Caco-2 (cell line): ENCODE measurements at regions of chr3 and their contacts with region 1.

Region 1: GRCh38 chr3:49839193-49839809 is 17.1 kb downstream of the TRAIP start:
- DNase-seq: peak; percentile 66 to 76
- H3K4me3 ChIP-seq: no peak overlapping the region
- H3K4me3 Mint-ChIP-seq: no peak overlapping the region
- H3K27ac Mint-ChIP-seq: no peak overlapping the region
- H3K4me1 ChIP-seq: no peaks in the 10 kb centered on the region
- H3K4me1 Mint-ChIP-seq: no peaks in the 10 kb centered on the region
- H3K27me3 ChIP-seq: no peaks in the 10 kb centered on the region
- H3K27me3 Mint-ChIP-seq: no peaks in the 10 kb centered on the region
- CTCF ChIP-seq: peak; percentile 78 to 86

Region 2: DNA sequence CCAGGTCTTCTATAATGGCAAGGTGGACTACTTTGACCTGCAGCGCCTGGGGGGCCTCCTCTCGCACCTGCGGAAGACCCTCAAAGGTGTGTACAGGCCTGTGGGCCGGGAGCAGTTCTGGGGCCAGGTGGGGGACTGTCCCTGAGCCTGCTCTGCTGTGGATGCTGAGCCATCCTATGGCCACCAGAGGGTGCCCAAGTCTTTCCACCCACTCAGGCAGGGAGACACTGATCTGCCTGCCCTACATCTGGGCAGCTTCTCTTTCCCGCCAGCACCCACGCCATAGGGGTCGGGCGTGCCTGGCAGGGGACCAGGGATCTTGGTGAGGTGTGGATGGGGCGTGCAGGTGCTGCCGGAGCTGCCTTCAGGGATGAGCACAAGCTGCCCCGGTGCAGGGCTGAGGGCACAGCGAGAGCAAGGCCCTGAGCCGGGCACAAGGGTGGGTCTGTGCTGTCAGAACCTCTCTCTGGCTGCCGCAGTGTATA is 135.8 kb before region 1 on chr3:
- CTCF ChIA-PET with region 1: interaction called, 5 read pairs
- POLR2A ChIA-PET with region 1: no interaction called
- intact Hi-C with region 1: loop called (anchors 1 kb)
- DNase-seq: peak; percentile 67 to 72
- H3K4me3 ChIP-seq: no peak overlapping the region
- H3K4me3 Mint-ChIP-seq: no peak overlapping the region
- H3K27ac Mint-ChIP-seq: no peak overlapping the region
- H3K4me1 ChIP-seq: no peaks in the 10 kb centered on the region
- H3K4me1 Mint-ChIP-seq: no peaks in the 10 kb centered on the region
- H3K27me3 ChIP-seq: no peaks in the 10 kb centered on the region
- H3K27me3 Mint-ChIP-seq: no peaks in the 10 kb centered on the region
- CTCF ChIP-seq: peak; percentile 71 to 87

Region 3: GRCh38 chr3:49723628-49724551 is 115.4 kb before region 1 on chr3 and contains the start of gene GMPPB:
- CTCF ChIA-PET with region 1: interaction called, 5 read pairs
- POLR2A ChIA-PET with region 1: no interaction called
- intact Hi-C with region 1: loop called (anchors 5 kb)
- DNase-seq: peak; percentile 94 to 97
- H3K4me3 ChIP-seq: peak within 1 kb of the TSS; percentile 99
- H3K4me3 Mint-ChIP-seq: peak within 1 kb of the TSS; percentile 79
- H3K27ac Mint-ChIP-seq: peak within 1 kb of the TSS; percentile 92
- H3K4me1 ChIP-seq: peaks cover 9% of the 10 kb centered on the region
- H3K4me1 Mint-ChIP-seq: peaks cover 7% of the 10 kb centered on the region
- H3K27me3 ChIP-seq: no peaks in the 10 kb centered on the region
- H3K27me3 Mint-ChIP-seq: no peaks in the 10 kb centered on the region
- CTCF ChIP-seq: no peak
- total RNA-seq, gene GMPPB: 26.2 and 26.5 TPM in 2 replicates

Region 4: GRCh38 chr3:49775538-49775937 is 63.8 kb before region 1 on chr3:
- CTCF ChIA-PET with region 1: no interaction called
- POLR2A ChIA-PET with region 1: no interaction called
- intact Hi-C with region 1: no loop called
- DNase-seq: no peak
- H3K4me3 ChIP-seq: no peak overlapping the region
- H3K4me3 Mint-ChIP-seq: no peak overlapping the region
- H3K27ac Mint-ChIP-seq: no peak overlapping the region
- H3K4me1 ChIP-seq: peaks cover 3% of the 10 kb centered on the region
- H3K4me1 Mint-ChIP-seq: peaks cover 8% of the 10 kb centered on the region
- H3K27me3 ChIP-seq: no peaks in the 10 kb centered on the region
- H3K27me3 Mint-ChIP-seq: no peaks in the 10 kb centered on the region
- CTCF ChIP-seq: no peak

Region 5: DNA sequence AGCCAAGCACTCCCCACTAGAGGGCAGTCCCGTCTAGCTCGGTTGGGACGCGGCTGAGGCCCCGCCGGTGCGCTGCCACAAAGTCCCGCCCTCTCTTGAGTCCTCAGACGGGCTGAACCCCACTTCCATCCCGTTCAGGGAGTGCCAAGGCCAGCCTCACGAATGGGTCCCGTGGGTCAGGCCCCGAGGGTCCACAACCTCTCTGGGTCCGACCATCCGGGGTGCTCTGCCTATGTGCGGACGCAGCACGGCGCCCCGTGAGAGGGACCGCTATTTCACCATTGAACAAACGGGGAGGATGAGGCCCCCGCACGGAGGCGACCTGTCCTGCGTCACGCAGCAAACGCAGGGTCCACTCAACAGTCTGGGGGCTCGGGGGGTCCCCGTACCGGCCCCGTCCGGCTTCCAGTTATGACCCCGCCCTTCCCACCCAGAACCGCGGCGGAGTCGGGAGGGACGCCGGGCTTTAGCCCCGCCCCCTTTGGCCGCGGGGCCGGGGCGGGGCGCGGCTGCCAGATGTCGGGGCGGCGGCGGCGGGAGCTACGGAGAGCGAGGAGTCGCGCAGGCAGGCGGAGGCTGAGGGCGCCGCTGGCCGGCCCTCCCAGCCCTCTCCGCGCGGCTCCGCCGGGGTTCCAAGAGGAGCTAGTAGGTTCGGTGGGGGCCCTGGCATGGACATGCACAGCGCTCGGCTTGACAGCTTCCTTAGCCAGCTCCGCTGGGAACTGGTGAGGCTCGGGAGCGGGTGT is 36.4 kb before region 1 on chr3 and contains the start of gene INKA1:
- CTCF ChIA-PET with region 1: interaction called, 24 read pairs
- POLR2A ChIA-PET with region 1: no interaction called
- intact Hi-C with region 1: loop called (anchors 1 kb)
- DNase-seq: peak; percentile 82 to 89
- H3K4me3 ChIP-seq: peak within 1 kb of the TSS; percentile 74
- H3K4me3 Mint-ChIP-seq: peak within 1 kb of the TSS; percentile 91
- H3K27ac Mint-ChIP-seq: peak within 1 kb of the TSS; percentile 71
- H3K4me1 ChIP-seq: no peaks in the 10 kb centered on the region
- H3K4me1 Mint-ChIP-seq: peaks cover 16% of the 10 kb centered on the region
- H3K27me3 ChIP-seq: no peaks in the 10 kb centered on the region
- H3K27me3 Mint-ChIP-seq: peaks cover 2% of the 10 kb centered on the region
- CTCF ChIP-seq: peak; percentile 78 to 88
- total RNA-seq, gene INKA1: not detected in 2 replicates

Region 6: DNA sequence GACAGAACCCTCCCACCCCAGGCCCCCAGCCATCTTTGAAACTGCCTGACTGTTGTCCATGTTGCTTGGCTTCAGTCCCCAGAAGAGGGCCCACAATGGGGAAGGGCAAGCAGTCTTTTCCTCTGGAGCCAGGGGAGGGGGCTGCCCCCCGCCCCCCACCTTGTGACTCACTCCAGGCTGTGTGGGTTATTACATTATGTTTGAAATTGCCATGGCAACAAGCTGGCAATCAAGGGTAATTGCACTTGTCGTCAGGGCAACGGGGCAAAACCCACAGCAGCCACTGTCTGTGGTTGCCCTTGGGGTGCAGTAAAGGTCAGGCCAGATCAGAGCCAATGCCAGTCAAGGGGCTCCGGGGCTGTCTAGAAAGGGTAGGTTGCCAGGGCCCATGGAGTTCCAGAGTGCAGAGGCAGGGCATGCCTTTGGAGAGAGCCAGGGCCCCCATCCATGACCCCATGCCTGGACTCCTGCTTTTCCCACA is 33.5 kb after region 1 on chr3:
- CTCF ChIA-PET with region 1: interaction called, 5 read pairs
- POLR2A ChIA-PET with region 1: no interaction called
- intact Hi-C with region 1: loop called (anchors 1 kb)
- DNase-seq: peak in 1 of 2 experiments; percentile 25
- H3K4me3 ChIP-seq: no peak overlapping the region
- H3K4me3 Mint-ChIP-seq: no peak overlapping the region
- H3K27ac Mint-ChIP-seq: peak overlapping the region; percentile 65
- H3K4me1 ChIP-seq: peaks cover 41% of the 10 kb centered on the region
- H3K4me1 Mint-ChIP-seq: peaks cover 13% of the 10 kb centered on the region
- H3K27me3 ChIP-seq: no peaks in the 10 kb centered on the region
- H3K27me3 Mint-ChIP-seq: no peaks in the 10 kb centered on the region
- CTCF ChIP-seq: no peak